ENCODE measurements at regions of chr2 and their contacts with region 1.

Region 1: DNA sequence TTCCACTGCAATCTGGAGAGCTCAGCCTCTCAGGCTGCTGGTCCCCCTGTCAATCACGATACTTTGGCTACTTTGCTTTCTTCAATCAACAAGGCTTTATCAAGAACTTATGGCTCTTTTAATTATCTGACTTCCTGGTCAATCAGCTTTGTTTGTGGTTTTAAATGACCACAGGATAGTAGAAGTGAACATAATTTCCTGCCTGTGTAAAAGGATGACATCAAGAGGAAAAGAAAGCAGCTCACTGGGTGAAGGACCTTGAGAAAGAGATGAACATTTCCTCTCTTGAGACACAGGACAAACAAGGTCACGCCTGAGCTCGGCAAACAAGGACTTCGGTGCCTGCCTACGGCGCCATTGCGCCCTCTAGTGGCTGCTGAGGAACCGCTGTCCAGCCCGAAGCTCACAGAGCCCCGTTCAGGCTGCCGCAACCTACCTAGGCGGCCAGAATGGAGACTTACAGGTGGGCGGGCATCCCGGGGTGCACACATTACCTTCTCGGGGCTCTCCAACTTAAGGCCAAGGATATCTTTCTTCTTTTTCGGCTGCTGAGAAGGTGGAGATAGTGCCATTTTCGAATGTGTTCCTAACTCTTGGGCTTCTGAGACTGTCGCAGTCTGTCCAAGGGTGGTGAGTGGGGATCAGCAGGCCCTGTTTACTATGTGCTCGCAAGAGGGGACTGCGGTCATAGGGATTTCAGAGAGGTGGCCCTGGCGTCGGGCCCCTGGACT is 54.0 kb downstream of the IL1RL2 start:
- DNase-seq: peak; percentile 97
- ATAC-seq: peak; percentile 96
- H3K4me3 ChIP-seq: no peak overlapping the region
- H3K27ac ChIP-seq: peak overlapping the region; percentile 36; the same call in 1 of the 2 replicates
- H3K4me1 ChIP-seq: peaks cover 8% of the 10 kb centered on the region
- H3K27me3 ChIP-seq: no peaks in the 10 kb centered on the region
- CTCF ChIP-seq: peak; percentile 98
- POLR2A ChIP-seq: peak; percentile 36; the same call in 1 of the 2 replicates
- RAD21 ChIP-seq: peak; percentile 99

Region 2: GRCh38 chr2:102005989-102006885 is 234.6 kb before region 1 on chr2:
- CTCF ChIA-PET with region 1: interaction called, 14 read pairs
- POLR2A ChIA-PET with region 1: no interaction called
- dilution Hi-C with region 1: no loop called
- in situ Hi-C with region 1: no loop called
- intact Hi-C with region 1: loop called (anchors 2 kb)
- DNase-seq: peak; percentile 56
- ATAC-seq: peak; percentile 97
- H3K4me3 ChIP-seq: no peak overlapping the region
- H3K27ac ChIP-seq: no peak overlapping the region
- H3K4me1 ChIP-seq: no peaks in the 10 kb centered on the region
- H3K27me3 ChIP-seq: peaks cover 5% of the 10 kb centered on the region; the same call in 1 of the 2 replicates
- CTCF ChIP-seq: peak; percentile 68
- POLR2A ChIP-seq: no peak
- RAD21 ChIP-seq: peak; percentile 73

Region 3: DNA sequence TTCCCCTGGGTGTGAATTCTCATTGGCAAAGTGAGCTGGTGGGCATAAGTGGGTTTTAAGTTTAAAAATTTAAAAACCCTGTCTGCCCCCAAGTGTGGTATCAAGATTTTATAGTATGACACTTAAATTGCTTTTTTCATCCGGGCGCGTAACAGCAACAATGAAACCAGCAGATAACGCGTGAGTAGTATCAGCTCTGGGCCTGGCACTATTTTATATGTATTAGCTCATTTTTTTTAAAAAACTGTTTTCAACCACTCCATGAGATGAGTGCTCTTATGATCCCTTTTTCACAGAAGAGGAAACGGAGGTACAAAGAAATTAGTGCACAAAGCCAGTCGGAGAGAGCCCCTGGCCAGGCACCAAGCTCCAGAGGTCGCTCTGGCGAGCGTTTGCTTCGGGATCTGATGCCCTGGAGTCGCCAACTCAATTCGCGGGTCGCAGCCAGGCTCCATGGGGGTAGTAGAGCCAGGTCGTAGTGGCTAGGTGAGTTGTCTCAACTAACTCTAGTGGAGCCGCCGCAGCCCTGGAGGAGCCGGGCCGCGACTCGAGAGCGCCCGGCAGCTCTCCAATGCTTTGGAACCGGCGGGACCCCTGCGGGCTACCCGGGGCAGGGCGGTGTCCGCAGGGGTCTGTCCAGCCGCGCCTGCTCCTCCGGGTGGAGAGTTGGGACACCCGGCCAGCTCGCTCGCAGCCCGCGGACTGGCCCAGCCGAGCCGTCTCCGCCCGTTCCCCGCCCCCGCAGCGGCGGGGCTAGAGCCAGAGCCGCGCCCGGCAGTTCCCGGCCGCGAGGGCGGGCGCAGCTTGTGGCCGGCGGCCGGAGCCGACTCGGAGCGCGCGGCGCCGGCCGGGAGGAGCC is 98.6 kb before region 1 on chr2 and contains the start of gene IL1R1:
- CTCF ChIA-PET with region 1: interaction called, 10 read pairs
- POLR2A ChIA-PET with region 1: interaction called, 6 read pairs
- dilution Hi-C with region 1: no loop called
- in situ Hi-C with region 1: no loop called
- intact Hi-C with region 1: no loop called
- DNase-seq: peak; percentile 80
- ATAC-seq: peak; percentile 91
- H3K4me3 ChIP-seq: peak within 1 kb of the TSS; percentile 89
- H3K27ac ChIP-seq: peak within 1 kb of the TSS; percentile 93
- H3K4me1 ChIP-seq: peaks cover 18% of the 10 kb centered on the region
- H3K27me3 ChIP-seq: no peaks in the 10 kb centered on the region
- CTCF ChIP-seq: no peak
- POLR2A ChIP-seq: peak; percentile 83
- RAD21 ChIP-seq: no peak
- total RNA-seq, gene IL1R1: 6.5 and 8.1 TPM in 2 replicates

Region 4: GRCh38 chr2:102355526-102356380 is 114.9 kb after region 1 on chr2 and contains the start of gene IL18R1:
- CTCF ChIA-PET with region 1: interaction called, 4 read pairs
- POLR2A ChIA-PET with region 1: no interaction called
- dilution Hi-C with region 1: no loop called
- in situ Hi-C with region 1: no loop called
- intact Hi-C with region 1: loop called (anchors 1 kb)
- DNase-seq: peak; percentile 69
- ATAC-seq: peak; percentile 100
- H3K4me3 ChIP-seq: peak within 1 kb of the TSS; percentile 83
- H3K27ac ChIP-seq: peak within 1 kb of the TSS; percentile 65; the same call in 1 of the 2 replicates
- H3K4me1 ChIP-seq: peaks cover 2% of the 10 kb centered on the region; the same call in 1 of the 2 replicates
- H3K27me3 ChIP-seq: 0 out of 2 replicates have a peak, but pooled peaks cover 2% of the 10 kb centered on the region
- CTCF ChIP-seq: peak; percentile 90
- POLR2A ChIP-seq: no peak; the same call in 1 of the 2 replicates
- RAD21 ChIP-seq: peak; percentile 88
- total RNA-seq, gene IL18R1: 0.18 and 0.28 TPM in 2 replicates

Measured in IMR-90 (cell line).